ENCODE measurements at regions of chr19 and their contacts with region 1.

Region 1: GRCh38 chr19:33260628-33261418 is 35.2 kb upstream of the SLC7A10 start:
- H3K4me3 Mint-ChIP-seq: peak overlapping the region; percentile 61
- H3K27ac Mint-ChIP-seq: peak overlapping the region; percentile 82
- H3K4me1 Mint-ChIP-seq: peaks cover 79% of the 10 kb centered on the region
- H3K27me3 Mint-ChIP-seq: no peaks in the 10 kb centered on the region

Region 2: GRCh38 chr19:33219261-33219812 is 41.5 kb before region 1 on chr19:
- intact Hi-C with region 1: no loop called
- H3K4me3 Mint-ChIP-seq: no peak overlapping the region
- H3K27ac Mint-ChIP-seq: no peak overlapping the region
- H3K4me1 Mint-ChIP-seq: no peaks in the 10 kb centered on the region
- H3K27me3 Mint-ChIP-seq: peaks cover 27% of the 10 kb centered on the region

Region 3: DNA sequence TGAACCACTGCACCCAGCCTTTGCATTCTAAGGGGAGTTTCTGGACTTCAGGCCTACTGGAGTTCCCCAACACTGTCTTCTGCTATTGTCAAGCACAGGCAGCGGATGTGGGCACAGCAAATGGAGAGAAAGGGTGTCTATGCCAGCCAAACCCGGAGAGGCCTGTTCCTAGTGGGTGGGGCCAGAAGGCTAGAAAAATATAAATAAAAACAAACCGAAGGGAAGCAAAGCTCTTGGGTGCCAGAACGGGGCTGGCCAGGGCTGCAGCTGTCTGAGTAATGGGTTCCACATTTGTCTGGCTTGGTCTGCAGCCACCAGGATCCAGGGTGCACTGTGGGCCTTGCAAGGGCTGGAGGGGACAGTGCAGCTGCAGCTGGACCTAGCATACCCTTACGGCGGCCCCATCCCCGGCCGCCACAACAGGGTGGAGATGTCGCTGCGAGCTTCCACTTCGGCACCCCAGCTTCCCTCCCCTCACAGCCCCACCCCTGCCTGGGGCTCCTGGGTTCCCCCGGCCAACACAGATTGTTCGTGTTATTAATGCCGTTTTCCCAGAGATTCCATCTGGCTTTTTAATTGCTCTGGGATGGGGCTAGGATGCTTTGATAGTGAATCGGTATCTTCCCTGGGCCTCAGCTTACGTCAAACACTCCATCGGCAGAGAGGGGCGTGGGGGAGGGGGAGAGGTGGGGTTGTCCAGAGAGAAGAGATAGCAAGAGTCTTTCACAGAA is 35.6 kb after region 1 on chr19:
- intact Hi-C with region 1: loop called (anchors 5 kb)
- H3K4me3 Mint-ChIP-seq: no peak overlapping the region
- H3K27ac Mint-ChIP-seq: peak overlapping the region; percentile 93
- H3K4me1 Mint-ChIP-seq: peaks cover 80% of the 10 kb centered on the region
- H3K27me3 Mint-ChIP-seq: no peaks in the 10 kb centered on the region

Measured in dendritic cell treated with granulocyte-macrophage colony-stimulating factor and Interleukin-4, amounts not matched to agents 40 ng/mL and 50 ng/mL, for 4 days (primary cell).